ENCODE measurements at regions of chr22 and their contacts with region 1.

Region 1: DNA sequence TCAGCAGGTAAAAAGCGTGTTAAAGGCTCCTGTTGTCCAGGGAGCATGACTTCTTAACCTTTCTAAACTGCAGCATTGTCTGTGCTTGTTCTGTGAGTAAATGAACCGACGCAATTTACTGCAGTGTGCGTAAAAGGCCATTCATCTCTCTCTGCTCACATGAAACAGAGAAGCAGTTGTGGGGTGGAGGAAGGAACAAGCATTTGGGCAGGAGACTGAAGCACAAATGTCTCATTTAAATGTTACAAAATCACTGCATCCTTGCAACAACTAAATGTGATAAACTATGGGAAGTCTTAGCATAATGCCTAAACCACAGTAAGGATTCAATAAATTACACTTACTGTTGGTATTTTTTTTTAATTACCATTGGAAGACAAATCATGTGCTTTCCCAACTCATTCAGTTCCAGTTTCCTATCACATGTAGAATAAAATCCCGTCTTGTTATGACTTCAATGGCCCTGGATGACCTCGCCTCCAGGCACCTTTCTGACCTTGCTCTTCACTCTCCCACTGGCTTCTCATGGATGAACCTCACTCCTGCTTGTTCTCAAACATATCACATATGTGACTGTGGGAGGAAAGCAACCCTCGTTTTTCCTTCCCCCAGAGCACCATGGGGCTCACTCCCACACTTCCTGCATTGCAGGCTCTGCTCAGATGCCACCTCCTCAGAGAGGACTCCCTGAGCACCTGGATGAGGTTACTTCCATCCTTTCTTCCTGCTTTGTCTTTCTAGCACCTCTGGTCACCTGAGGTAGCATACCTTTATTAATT is 21.6 kb upstream of the RFPL2 start:
- DNase-seq: no peak
- H3K4me3 Mint-ChIP-seq: no peak overlapping the region
- H3K27ac Mint-ChIP-seq: no peak overlapping the region
- H3K4me1 Mint-ChIP-seq: no peaks in the 10 kb centered on the region
- H3K27me3 Mint-ChIP-seq: peaks cover 17% of the 10 kb centered on the region
- CTCF ChIP-seq: no peak

Region 2: DNA sequence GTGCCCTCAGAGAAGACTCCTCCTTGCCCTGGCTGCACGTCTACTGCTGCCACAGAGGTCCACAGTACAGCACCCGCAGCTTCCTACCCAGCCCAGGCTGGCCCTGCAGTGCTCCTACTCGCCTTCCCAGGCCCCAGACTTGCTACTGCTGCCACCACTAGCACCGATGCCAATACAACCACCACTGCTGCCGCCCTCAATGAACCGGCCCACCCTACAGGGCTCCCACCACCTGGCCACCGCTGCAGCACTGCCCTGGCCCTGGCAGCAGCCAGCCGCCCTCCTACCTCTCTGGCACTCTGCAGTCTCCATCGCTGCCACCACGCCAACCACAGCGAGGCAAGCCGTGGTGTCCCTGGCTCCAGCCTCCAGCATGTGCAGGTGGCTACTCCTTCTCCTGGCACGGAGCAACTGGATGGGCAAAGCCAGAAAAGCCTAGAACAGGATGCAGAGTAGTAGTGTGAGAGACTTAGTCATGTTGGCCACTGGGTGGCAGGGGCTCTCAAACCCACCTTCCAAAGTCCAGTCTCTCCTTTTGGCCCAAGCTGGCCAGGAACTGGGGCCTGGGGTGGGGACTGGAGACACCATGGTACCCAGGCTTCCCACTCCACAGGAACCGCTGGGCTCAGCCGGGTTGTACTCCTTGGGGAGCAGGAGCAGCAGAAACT is 106.8 kb before region 1 on chr22:
- CTCF ChIA-PET with region 1: interaction called, 10 read pairs
- intact Hi-C with region 1: no loop called
- DNase-seq: no peak
- H3K4me3 Mint-ChIP-seq: no peak overlapping the region
- H3K27ac Mint-ChIP-seq: no peak overlapping the region
- H3K4me1 Mint-ChIP-seq: no peaks in the 10 kb centered on the region
- H3K27me3 Mint-ChIP-seq: peaks cover 33% of the 10 kb centered on the region
- CTCF ChIP-seq: no peak

Region 3: GRCh38 chr22:32245042-32245441 is 18.5 kb after region 1 on chr22:
- CTCF ChIA-PET with region 1: no interaction called
- intact Hi-C with region 1: no loop called
- DNase-seq: no peak
- H3K4me3 Mint-ChIP-seq: no peak overlapping the region
- H3K27ac Mint-ChIP-seq: no peak overlapping the region
- H3K4me1 Mint-ChIP-seq: peaks cover 18% of the 10 kb centered on the region
- H3K27me3 Mint-ChIP-seq: peaks cover 24% of the 10 kb centered on the region
- CTCF ChIP-seq: no peak

Region 4: GRCh38 chr22:32555581-32555980 is 329.1 kb after region 1 on chr22:
- CTCF ChIA-PET with region 1: no interaction called
- intact Hi-C with region 1: no loop called
- DNase-seq: no peak
- H3K4me3 Mint-ChIP-seq: no peak overlapping the region
- H3K27ac Mint-ChIP-seq: no peak overlapping the region
- H3K4me1 Mint-ChIP-seq: peaks cover 32% of the 10 kb centered on the region
- H3K27me3 Mint-ChIP-seq: no peaks in the 10 kb centered on the region
- CTCF ChIP-seq: no peak

Measured in Calu3 (cell line).